ENCODE measurements at regions of chr11 and their contacts with region 1.

Region 1: GRCh38 chr11:72724851-72725730 is 27.1 kb downstream of the ARAP1 start:
- DNase-seq: peak; percentile 83 to 90
- H3K4me3 ChIP-seq: no peak overlapping the region
- H3K4me3 Mint-ChIP-seq: no peak overlapping the region
- H3K27ac Mint-ChIP-seq: no peak overlapping the region
- H3K4me1 ChIP-seq: peaks cover 4% of the 10 kb centered on the region; the same call in 1 of the 2 replicates
- H3K4me1 Mint-ChIP-seq: no peaks in the 10 kb centered on the region
- H3K27me3 ChIP-seq: no peaks in the 10 kb centered on the region
- H3K27me3 Mint-ChIP-seq: no peaks in the 10 kb centered on the region
- CTCF ChIP-seq: peak; percentile 96 to 97

Region 2: DNA sequence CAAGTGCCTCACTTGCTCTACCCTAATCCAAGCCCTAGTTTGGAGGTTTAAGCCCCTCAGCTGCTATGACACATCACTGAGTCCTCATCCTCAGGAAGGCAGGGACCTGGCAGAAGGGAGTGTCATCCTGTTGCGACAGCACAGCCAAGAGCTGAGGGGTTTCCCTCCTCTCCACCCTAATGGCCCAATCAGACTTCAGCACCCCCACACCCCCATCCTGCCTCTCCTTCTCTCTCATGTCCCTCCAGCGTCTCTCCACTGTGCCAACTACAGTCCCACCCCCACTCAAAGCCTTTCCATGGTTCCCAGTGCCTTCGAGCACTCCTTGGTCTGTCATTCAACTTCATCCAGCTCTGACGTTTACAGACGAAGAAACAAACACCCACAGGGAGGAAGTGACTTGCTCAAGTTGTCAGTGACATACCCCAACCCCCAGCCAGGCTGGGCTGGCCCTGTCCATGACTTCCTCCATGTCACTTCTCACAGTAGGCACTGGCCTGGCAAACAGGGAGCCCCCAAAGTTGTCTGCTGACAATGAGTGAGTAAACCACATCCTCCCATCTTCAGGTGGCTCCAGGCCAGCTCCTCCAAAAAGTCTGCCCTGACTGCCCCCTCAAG is 11.5 kb after region 1 on chr11:
- CTCF ChIA-PET with region 1: interaction called, 20 read pairs
- POLR2A ChIA-PET with region 1: no interaction called
- intact Hi-C with region 1: no loop called
- DNase-seq: no peak
- H3K4me3 ChIP-seq: no peak overlapping the region
- H3K4me3 Mint-ChIP-seq: no peak overlapping the region
- H3K27ac Mint-ChIP-seq: peak overlapping the region; percentile 29
- H3K4me1 ChIP-seq: peaks cover 23% of the 10 kb centered on the region
- H3K4me1 Mint-ChIP-seq: peaks cover 27% of the 10 kb centered on the region
- H3K27me3 ChIP-seq: no peaks in the 10 kb centered on the region
- H3K27me3 Mint-ChIP-seq: no peaks in the 10 kb centered on the region
- CTCF ChIP-seq: no peak

Region 3: DNA sequence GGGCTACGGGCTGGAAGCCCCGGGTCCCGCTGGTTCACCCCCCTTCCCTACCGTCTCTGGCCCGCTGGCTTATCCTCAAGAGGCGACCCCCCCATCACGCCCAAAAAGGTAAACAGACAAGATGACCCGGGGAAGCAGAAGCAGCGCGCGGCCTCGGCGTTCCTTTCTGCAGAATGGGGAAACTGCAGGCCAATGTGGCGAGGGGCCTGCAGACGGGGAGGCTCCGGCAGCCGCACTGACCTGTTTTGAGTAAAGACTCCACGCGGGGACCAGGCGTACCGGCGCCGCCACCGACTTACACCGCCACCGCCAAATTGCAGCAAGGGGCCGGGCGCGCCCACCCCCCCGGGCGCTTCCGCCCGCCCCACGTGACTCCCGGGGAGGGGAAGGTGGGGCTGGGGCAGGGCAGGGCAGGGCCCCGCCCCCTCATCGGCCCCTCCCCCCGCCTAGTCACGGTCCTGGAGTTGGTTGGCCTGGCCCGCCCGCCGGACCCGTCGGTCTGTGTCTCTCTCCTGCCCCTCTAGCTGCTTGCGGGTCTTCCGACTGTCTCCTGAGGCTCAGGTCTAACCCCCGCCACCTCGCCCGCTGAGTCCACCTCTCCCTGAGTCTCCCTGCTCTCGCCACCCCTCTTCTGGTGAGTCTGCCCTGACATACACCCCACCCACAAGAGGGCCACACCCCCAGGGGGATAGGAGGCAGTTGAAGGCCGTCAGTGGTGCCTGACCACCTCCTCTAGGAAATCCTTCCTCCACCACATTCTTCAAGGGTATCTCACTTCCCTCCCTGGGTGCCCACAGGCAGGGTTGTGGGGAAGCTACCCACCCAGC is 27.2 kb after region 1 on chr11 and contains the start of gene ARAP1:
- CTCF ChIA-PET with region 1: interaction called, 8 read pairs
- POLR2A ChIA-PET with region 1: interaction called, 3 read pairs
- intact Hi-C with region 1: loop called (anchors 1 kb)
- DNase-seq: peak; percentile 89 to 90
- H3K4me3 ChIP-seq: peak within 1 kb of the TSS; percentile 75
- H3K4me3 Mint-ChIP-seq: peak within 1 kb of the TSS; percentile 89
- H3K27ac Mint-ChIP-seq: peak within 1 kb of the TSS; percentile 94
- H3K4me1 ChIP-seq: peaks cover 30% of the 10 kb centered on the region
- H3K4me1 Mint-ChIP-seq: peaks cover 53% of the 10 kb centered on the region
- H3K27me3 ChIP-seq: no peaks in the 10 kb centered on the region
- H3K27me3 Mint-ChIP-seq: no peaks in the 10 kb centered on the region
- CTCF ChIP-seq: peak in 1 of 2 experiments; percentile 28
- total RNA-seq, gene ARAP1: 87.1 and 102 TPM in 2 replicates

Region 4: DNA sequence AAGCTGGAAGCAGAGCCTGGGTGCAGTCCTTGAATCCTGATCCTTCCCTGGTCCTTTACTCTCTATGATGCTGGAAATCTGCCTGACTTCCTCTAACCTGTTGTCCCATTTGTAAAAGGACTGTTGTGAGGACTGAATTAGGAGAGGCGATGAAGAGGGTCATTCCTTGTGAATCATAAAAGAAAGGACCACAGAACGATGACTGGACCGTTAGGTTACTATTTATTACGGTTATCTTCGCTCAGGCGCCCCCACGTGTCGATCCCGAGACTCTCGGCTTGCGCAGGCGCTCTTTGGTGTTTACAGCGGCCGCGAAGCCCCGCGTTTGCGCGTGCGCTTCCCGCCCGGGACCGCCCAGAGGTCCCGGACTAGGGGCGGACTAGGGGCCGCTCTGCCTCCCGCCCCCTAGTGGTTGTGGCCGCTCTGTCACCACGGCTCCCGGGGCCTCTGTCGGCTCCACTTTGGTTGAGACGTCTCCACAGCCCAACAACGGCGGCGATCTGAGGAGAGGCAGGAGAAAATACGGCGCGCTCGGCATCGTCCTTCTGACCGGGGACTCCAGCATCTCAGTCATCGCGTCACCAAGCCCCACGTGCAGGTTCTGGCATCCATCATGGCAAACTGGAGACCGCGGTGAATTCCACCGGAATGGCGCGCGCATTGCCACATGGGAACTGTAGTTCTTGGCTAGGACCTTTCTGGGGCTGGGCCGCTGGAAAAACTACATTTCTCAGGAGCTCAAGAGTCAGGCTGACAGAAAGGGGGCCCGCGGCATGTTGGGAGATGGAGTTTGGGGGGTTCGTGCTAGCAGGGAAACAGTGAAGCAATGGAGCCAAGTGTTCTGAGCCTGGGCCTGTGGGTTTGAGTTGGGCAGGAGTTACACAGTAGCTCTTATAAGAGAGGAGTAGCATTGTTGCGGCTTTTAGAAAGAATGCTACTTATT is 68.6 kb after region 1 on chr11 and contains the start of gene STARD10:
- CTCF ChIA-PET with region 1: interaction called, 64 read pairs
- POLR2A ChIA-PET with region 1: interaction called, 11 read pairs
- intact Hi-C with region 1: loop called (anchors 1 kb)
- DNase-seq: peak; percentile 97 to 99
- H3K4me3 ChIP-seq: peak within 1 kb of the TSS; percentile 66
- H3K4me3 Mint-ChIP-seq: peak within 1 kb of the TSS; percentile 82
- H3K27ac Mint-ChIP-seq: peak within 1 kb of the TSS; percentile 91
- H3K4me1 ChIP-seq: peaks cover 26% of the 10 kb centered on the region
- H3K4me1 Mint-ChIP-seq: peaks cover 21% of the 10 kb centered on the region
- H3K27me3 ChIP-seq: no peaks in the 10 kb centered on the region
- H3K27me3 Mint-ChIP-seq: no peaks in the 10 kb centered on the region
- CTCF ChIP-seq: peak; percentile 99 to 100
- total RNA-seq, gene STARD10: 492 and 501 TPM in 2 replicates

Region 5: DNA sequence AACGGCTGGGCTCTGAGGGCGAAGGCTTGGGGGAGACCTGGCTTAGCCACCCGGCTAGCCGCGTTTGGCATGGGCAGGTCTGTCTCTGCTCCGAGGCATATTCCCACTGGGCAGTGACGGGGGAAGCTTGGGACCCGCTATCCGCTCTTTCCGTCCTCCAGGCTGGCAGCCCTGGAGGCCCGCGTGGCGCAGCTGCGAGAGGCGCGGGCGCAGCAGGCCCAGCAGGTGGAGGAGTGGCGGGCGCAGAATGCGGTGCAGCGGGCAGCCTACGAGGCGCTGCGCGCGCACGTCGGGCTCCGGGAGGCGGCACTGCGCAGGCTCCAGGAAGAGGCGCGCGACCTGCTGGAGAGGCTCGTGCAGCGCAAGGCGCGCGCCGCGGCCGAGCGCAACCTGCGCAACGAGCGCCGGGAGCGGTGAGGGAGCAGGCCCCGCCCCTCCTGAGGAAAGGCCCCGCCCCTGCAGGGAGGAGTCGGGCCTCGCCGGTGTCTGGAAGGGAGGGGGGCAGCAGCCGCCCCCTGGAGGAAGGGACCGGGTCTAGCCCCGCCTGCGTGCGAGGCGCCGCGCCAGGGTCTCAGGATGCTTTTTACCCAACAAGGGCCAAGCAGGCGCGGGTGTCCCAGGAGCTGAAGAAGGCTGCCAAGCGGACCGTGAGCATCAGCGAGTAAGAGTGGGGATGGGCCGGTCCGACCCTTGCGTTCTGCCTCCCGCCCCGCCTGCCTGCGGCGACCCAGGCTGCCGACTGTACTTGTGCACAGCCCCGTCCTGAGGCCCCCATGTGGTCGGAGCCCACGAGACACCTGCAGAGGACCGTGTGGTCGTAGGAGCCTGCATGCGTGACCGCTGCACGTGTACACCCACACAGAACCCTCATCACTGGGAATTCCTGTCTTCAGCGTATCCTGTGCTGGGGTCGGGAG is 97.0 kb after region 1 on chr11:
- CTCF ChIA-PET with region 1: interaction called, 17 read pairs
- POLR2A ChIA-PET with region 1: no interaction called
- intact Hi-C with region 1: no loop called
- DNase-seq: peak; percentile 95 to 99
- H3K4me3 ChIP-seq: peak overlapping the region; percentile 53
- H3K4me3 Mint-ChIP-seq: peak overlapping the region; percentile 74
- H3K27ac Mint-ChIP-seq: no peak overlapping the region
- H3K4me1 ChIP-seq: peaks cover 5% of the 10 kb centered on the region; the same call in 1 of the 2 replicates
- H3K4me1 Mint-ChIP-seq: no peaks in the 10 kb centered on the region
- H3K27me3 ChIP-seq: no peaks in the 10 kb centered on the region
- H3K27me3 Mint-ChIP-seq: no peaks in the 10 kb centered on the region
- CTCF ChIP-seq: peak; percentile 35 to 39

Region 6: DNA sequence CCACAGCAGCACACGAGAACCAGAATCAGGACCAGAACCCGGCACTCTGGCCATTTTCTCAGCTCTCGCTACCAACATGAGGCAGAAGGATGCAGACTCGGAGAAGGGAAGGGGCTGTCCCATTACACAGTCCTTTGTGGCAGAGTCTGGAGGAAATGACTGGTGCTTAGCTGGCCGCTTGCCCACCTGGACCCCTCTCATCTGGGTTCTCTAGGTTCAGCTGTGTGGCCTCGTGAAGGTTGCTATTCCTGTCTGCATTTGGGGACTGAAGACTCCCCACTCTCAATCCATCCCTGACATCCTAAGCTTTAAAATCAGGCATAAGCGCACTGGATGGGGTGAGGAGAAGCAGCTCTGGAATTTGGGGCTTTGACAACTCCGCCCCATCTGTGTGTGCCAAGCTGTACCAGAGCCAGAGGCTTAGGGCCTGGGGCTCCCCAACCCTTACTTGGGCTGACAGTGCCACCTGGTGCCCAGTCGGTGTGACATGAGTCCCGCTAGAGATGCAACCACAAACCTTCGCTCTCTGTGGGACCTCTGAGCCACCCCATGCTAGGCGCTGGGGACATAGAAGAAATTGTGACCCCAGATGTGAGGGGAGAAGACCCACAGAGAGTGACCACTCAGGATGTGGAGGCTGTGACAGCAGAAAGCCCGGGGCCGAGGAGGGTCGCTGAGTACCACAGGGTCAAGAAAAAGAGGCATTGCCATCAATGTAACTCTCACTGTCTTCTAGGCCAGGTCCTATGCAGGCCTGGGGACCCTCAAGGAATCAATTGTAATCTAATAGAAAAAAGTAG is 452.9 kb after region 1 on chr11:
- CTCF ChIA-PET with region 1: interaction called, 10 read pairs
- POLR2A ChIA-PET with region 1: no interaction called
- intact Hi-C with region 1: loop called (anchors 2 kb)
- DNase-seq: peak; percentile 85 to 88
- H3K4me3 ChIP-seq: no peak overlapping the region
- H3K4me3 Mint-ChIP-seq: no peak overlapping the region
- H3K27ac Mint-ChIP-seq: no peak overlapping the region
- H3K4me1 ChIP-seq: peaks cover 30% of the 10 kb centered on the region
- H3K4me1 Mint-ChIP-seq: peaks cover 19% of the 10 kb centered on the region
- H3K27me3 ChIP-seq: no peaks in the 10 kb centered on the region
- H3K27me3 Mint-ChIP-seq: no peaks in the 10 kb centered on the region
- CTCF ChIP-seq: peak; percentile 93 to 96